ENCODE measurements at regions of chr2 and their contacts with region 1.

Region 1: DNA sequence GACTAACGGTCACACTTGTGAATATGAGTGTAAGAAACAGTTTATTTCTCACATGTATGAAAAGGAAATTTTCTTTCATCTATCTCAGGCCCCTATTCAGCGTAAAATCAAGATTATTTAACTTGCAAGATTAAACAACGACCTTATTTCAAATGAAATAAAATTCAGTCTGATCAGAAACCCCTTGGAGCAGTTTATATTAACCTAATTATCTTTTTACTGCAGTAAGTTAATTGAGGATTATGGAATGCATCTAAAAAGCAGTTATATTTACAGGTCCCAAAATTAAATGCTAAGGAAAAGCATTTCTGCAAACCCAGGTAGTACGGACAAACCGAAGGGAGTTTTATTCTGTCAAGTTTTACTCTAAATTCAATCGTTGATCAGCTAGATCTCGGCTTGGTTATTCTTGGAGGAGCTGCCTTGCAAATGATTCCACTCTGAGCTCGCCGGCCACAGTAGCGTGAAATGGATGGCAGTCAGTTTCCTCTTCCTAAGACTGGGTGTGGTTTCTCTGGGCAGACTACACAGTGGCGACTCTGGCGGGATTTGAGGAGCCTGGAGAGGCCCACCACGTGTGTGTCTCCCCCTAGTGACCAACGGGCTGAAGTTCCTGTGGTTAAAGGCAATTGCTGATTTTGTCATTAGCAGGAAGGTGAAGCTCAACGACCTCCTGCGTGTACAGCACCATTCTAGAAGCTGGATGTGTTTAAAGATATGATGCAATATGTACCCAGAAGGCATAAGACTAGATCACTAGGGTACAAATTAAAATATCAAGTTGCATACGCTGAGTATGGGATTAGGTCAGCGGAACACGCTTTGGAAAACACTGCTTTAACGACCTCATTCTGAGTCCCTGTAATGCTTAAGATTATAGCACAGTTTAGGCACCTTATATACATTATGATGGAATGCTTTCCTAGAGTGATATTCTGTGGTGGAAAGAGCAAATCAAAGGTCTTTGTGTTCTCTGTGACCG is 36.4 kb downstream of the PRKRA start:
- DNase-seq: peak; percentile 88 to 98 (median 92)
- ATAC-seq: peak; percentile 92
- H3K4me3 ChIP-seq: peak overlapping the region; percentile 46
- H3K27ac ChIP-seq: peak overlapping the region; percentile 78
- H3K4me1 ChIP-seq: peaks cover 8 to 11% of the 10 kb centered on the region in 2 experiments; a peak in 4 of 5 replicates
- H3K27me3 ChIP-seq: no peaks in the 10 kb centered on the region
- CTCF ChIP-seq: peak; percentile 97 to 100 (median 99)
- EP300 ChIP-seq: peak; percentile 79
- POLR2A ChIP-seq: peak; percentile 62
- RAD21 ChIP-seq: peak; percentile 96 to 97

Region 2: GRCh38 chr2:178112202-178113152 is 302.1 kb before region 1 on chr2 and contains the start of gene RBM45:
- CTCF ChIA-PET with region 1: interaction called, 17 read pairs
- POLR2A ChIA-PET with region 1: interaction called, 7 read pairs
- in situ Hi-C with region 1: loop called (anchors 5 kb)
- intact Hi-C with region 1: loop called (anchors 1 kb)
- DNase-seq: peak; percentile 95 to 96 (median 95)
- ATAC-seq: peak; percentile 97
- H3K4me3 ChIP-seq: peak within 1 kb of the TSS; percentile 66
- H3K27ac ChIP-seq: peak within 1 kb of the TSS; percentile 54; the same call in 2 of the 3 replicates
- H3K4me1 ChIP-seq: peaks cover 10 to 16% of the 10 kb centered on the region in 2 experiments; a peak in 3 of 5 replicates
- H3K27me3 ChIP-seq: no peaks in the 10 kb centered on the region; a peak in 1 of 5 replicates
- CTCF ChIP-seq: peak; percentile 97 to 99 (median 98)
- EP300 ChIP-seq: peak; percentile 61
- POLR2A ChIP-seq: peak; percentile 93
- RAD21 ChIP-seq: peak; percentile 79 to 86
- polyA plus RNA-seq, gene RBM45: 6.7 to 9.9 TPM

Region 3: GRCh38 chr2:178194600-178195389 is 219.8 kb before region 1 on chr2:
- CTCF ChIA-PET with region 1: no interaction called
- POLR2A ChIA-PET with region 1: no interaction called
- in situ Hi-C with region 1: no loop called
- intact Hi-C with region 1: loop called (anchors 5 kb)
- DNase-seq: peak in 3 of 4 experiments; percentile 56 to 68 (median 64)
- ATAC-seq: peak; percentile 59
- H3K4me3 ChIP-seq: peak overlapping the region; percentile 80
- H3K27ac ChIP-seq: peak overlapping the region; percentile 58
- H3K4me1 ChIP-seq: peaks cover 18 to 19% of the 10 kb centered on the region in 2 experiments; a peak in 4 of 5 replicates
- H3K27me3 ChIP-seq: peaks cover 4% of the 10 kb centered on the region in 2 experiments; a peak in 3 of 5 replicates
- CTCF ChIP-seq: no peak
- EP300 ChIP-seq: no peak
- POLR2A ChIP-seq: 0 out of 2 replicates have a peak, but pooled peaks have one; percentile 47
- RAD21 ChIP-seq: no peak

Region 4: GRCh38 chr2:178397002-178397605 is 17.5 kb before region 1 on chr2:
- CTCF ChIA-PET with region 1: interaction called, 13 read pairs
- POLR2A ChIA-PET with region 1: interaction called, 41 read pairs
- in situ Hi-C with region 1: no loop called
- intact Hi-C with region 1: loop called (anchors 1 kb)
- DNase-seq: peak in 3 of 4 experiments; percentile 27 to 63 (median 46)
- ATAC-seq: peak; percentile 83
- H3K4me3 ChIP-seq: no peak overlapping the region
- H3K27ac ChIP-seq: no peak overlapping the region
- H3K4me1 ChIP-seq: peaks cover 0 to 9% of the 10 kb centered on the region in 2 experiments; a peak in 4 of 5 replicates
- H3K27me3 ChIP-seq: no peaks in the 10 kb centered on the region
- CTCF ChIP-seq: peak; percentile 60 to 84 (median 67); a peak in 5 of 6 replicates
- EP300 ChIP-seq: no peak
- POLR2A ChIP-seq: no peak
- RAD21 ChIP-seq: peak; percentile 59 to 76

Region 5: GRCh38 chr2:178428396-178428806 is 13.8 kb after region 1 on chr2:
- CTCF ChIA-PET with region 1: no interaction called
- POLR2A ChIA-PET with region 1: interaction called, 21 read pairs
- in situ Hi-C with region 1: no loop called
- intact Hi-C with region 1: no loop called
- DNase-seq: peak in 2 of 4 experiments; percentile 63 to 74
- ATAC-seq: peak; percentile 90
- H3K4me3 ChIP-seq: no peak overlapping the region
- H3K27ac ChIP-seq: peak overlapping the region; percentile 69
- H3K4me1 ChIP-seq: peaks cover 18 to 23% of the 10 kb centered on the region in 2 experiments
- H3K27me3 ChIP-seq: no peaks in the 10 kb centered on the region
- CTCF ChIP-seq: no peak
- EP300 ChIP-seq: no peak
- POLR2A ChIP-seq: no peak
- RAD21 ChIP-seq: no peak

Region 6: GRCh38 chr2:178478439-178479274 is 64.1 kb after region 1 on chr2 and contains the start of gene FKBP7:
- CTCF ChIA-PET with region 1: no interaction called
- POLR2A ChIA-PET with region 1: no interaction called
- in situ Hi-C with region 1: no loop called
- intact Hi-C with region 1: loop called (anchors 2 kb)
- DNase-seq: peak; percentile 85 to 93 (median 90)
- ATAC-seq: peak; percentile 83
- H3K4me3 ChIP-seq: peak within 1 kb of the TSS; percentile 57
- H3K27ac ChIP-seq: peak within 1 kb of the TSS; percentile 72
- H3K4me1 ChIP-seq: peaks cover 20 to 29% of the 10 kb centered on the region in 2 experiments
- H3K27me3 ChIP-seq: no peaks in the 10 kb centered on the region
- CTCF ChIP-seq: peak; percentile 94 to 97 (median 96)
- EP300 ChIP-seq: peak; percentile 25; the same call in 1 of the 2 replicates
- POLR2A ChIP-seq: peak; percentile 85
- RAD21 ChIP-seq: peak; percentile 73 to 90
- polyA plus RNA-seq, gene FKBP7: 19.3 to 23.2 TPM

Region 7: GRCh38 chr2:178635897-178636296 is 221.3 kb after region 1 on chr2:
- CTCF ChIA-PET with region 1: no interaction called
- POLR2A ChIA-PET with region 1: no interaction called
- in situ Hi-C with region 1: no loop called
- intact Hi-C with region 1: no loop called
- DNase-seq: no peak
- ATAC-seq: no peak
- H3K4me3 ChIP-seq: no peak overlapping the region
- H3K27ac ChIP-seq: no peak overlapping the region
- H3K4me1 ChIP-seq: no peaks in the 10 kb centered on the region
- H3K27me3 ChIP-seq: peaks cover 0 to 10% of the 10 kb centered on the region in 2 experiments; a peak in 3 of 5 replicates
- CTCF ChIP-seq: no peak
- EP300 ChIP-seq: no peak
- POLR2A ChIP-seq: no peak
- RAD21 ChIP-seq: no peak

Region 8: DNA sequence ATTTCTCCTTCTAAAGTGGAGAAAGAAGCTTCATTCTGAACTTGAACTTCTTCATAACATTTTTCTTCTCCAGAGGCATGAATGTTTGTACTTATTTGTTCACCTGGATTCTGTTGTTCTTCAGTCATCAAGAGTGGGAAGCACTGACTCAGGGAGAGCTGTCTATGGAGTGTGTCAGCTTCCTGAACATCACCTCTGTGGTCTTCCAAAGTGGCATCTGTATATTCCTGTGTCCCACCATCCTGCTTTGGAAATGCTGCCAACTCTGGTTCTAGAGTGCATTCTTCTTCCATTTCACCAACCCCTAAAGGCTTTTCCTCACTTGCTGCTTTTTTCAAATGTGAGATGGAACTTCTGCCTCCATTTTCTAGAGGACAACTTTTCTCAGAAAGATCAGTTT is 333.2 kb after region 1 on chr2:
- CTCF ChIA-PET with region 1: no interaction called
- POLR2A ChIA-PET with region 1: no interaction called
- in situ Hi-C with region 1: no loop called
- intact Hi-C with region 1: no loop called
- DNase-seq: no peak
- ATAC-seq: no peak
- H3K4me3 ChIP-seq: no peak overlapping the region
- H3K27ac ChIP-seq: no peak overlapping the region
- H3K4me1 ChIP-seq: no peaks in the 10 kb centered on the region
- H3K27me3 ChIP-seq: no peaks in the 10 kb centered on the region
- CTCF ChIP-seq: no peak
- EP300 ChIP-seq: no peak
- POLR2A ChIP-seq: no peak
- RAD21 ChIP-seq: no peak